ENCODE measurements at regions of chr18 and their contacts with region 1.

Region 1: DNA sequence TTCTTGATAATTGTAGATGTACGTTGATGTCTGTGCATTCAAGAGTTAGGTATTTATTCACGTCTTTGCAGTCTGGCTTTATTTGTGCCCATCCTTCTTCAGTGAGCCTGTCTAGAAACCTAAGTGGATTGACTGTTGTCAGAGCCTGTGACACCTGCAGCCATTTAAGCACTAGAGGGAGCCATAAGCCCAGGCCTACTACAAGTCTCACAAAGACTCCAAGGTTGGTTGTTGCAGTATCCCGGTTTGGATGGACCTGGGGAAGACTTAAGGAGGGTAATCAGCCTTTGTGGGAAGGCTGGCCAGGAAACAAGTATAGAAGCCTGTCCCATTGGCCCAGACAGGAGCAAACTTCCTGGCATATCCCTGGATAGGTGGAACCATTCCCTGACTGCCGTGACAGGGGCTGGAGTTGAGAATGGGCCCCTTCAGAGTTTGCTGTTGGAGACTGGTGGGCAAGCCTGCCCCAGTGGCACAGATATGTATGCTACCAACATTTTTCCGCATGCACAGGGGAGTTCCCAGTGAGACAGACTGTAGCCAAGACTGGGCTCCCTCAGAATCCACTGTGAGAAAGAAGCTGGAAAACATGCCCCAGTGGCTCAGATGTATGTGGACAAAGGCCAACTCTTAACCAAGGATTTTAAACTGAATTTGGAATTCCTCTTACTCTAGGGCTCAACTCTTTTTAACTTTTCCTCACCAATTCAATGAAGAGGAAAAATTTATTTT is 9.3 kb upstream of the LRRC30 start:
- H3K4me3 ChIP-seq: no peak overlapping the region
- H3K27ac ChIP-seq: no peak overlapping the region
- H3K4me1 ChIP-seq: no peaks in the 10 kb centered on the region
- CTCF ChIP-seq: peak; percentile 69

Region 2: DNA sequence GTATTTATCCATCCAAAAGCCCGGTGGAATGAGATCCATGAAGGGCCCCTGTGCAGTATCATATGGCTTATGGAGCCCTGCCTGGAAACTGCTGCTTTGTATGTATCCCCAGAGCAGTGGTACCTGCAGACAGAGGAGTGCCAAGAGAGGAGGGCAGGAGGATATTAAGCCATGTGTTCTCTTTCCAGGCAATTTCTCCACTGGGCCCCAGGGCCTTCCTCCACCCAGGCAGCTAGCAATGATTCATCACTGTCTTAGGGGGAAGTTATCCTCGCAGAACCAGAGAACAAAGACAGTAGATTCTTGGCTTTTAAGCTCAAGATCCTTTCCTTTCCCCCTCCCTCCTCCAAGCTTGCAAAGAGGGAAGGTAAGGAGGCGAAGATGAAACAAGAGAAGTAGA is 107.4 kb after region 1 on chr18:
- CTCF ChIA-PET with region 1: no interaction called
- POLR2A ChIA-PET with region 1: interaction called, 13 read pairs
- H3K4me3 ChIP-seq: no peak overlapping the region
- H3K27ac ChIP-seq: no peak overlapping the region
- H3K4me1 ChIP-seq: no peaks in the 10 kb centered on the region
- CTCF ChIP-seq: no peak

Measured in HEK293 (cell line).